ENCODE measurements at regions of chr6 and their contacts with region 1.

Region 1: DNA sequence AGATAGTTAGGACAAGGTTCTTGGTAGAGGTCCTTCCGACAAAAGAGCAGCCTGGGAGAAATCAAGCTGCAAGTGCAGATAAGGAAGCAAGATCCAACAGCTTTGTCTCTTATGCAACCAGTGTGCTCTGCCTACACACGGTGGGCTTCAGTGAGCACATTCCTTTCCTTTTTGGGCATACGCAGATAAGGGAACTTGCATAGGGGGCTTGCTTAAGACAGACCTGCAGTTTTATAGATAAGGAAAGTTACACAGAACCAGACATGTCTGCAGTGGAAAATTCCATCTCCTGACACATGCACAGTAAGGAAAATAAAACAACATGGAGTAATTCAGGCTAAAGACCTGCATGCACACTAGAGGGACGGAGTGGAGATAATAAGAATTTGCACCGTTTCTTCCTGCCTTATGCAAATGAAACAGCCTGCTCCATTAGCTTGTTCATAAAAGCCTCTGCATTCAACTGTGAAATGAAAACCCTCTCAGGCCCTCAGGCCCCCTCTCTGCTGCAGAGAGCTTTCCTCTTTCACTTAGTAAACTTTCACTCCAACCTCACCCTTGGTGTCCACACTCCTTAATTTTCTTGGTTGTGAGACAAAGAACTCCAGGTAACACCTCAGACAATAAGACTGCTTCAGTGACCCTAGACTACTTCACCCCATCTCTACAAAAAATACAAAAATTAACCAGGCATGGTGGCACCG is 97.5 kb upstream of the MYLIP start:
- DNase-seq: peak; percentile 93 to 98 (median 94)
- ATAC-seq: peak; percentile 97
- H3K4me3 ChIP-seq: no peak overlapping the region
- H3K27ac ChIP-seq: peak overlapping the region; percentile 83
- H3K4me1 ChIP-seq: peaks cover 10 to 33% of the 10 kb centered on the region in 2 experiments
- H3K27me3 ChIP-seq: no peaks in the 10 kb centered on the region
- CTCF ChIP-seq: no peak; a peak in 1 of 6 replicates
- EP300 ChIP-seq: peak; percentile 100
- POLR2A ChIP-seq: no peak
- RAD21 ChIP-seq: peak; percentile 38 to 62

Region 2: GRCh38 chr6:16004934-16005679 is 26.3 kb before region 1 on chr6:
- CTCF ChIA-PET with region 1: interaction called, 3 read pairs
- POLR2A ChIA-PET with region 1: interaction called, 3 read pairs
- in situ Hi-C with region 1: no loop called
- intact Hi-C with region 1: loop called (anchors 1 kb)
- DNase-seq: peak; percentile 73 to 88 (median 76)
- ATAC-seq: peak; percentile 83
- H3K4me3 ChIP-seq: no peak overlapping the region
- H3K27ac ChIP-seq: peak overlapping the region; percentile 78
- H3K4me1 ChIP-seq: peaks cover 49 to 80% of the 10 kb centered on the region in 2 experiments
- H3K27me3 ChIP-seq: no peaks in the 10 kb centered on the region
- CTCF ChIP-seq: no peak
- EP300 ChIP-seq: peak; percentile 82
- POLR2A ChIP-seq: no peak
- RAD21 ChIP-seq: peak in 1 of 2 experiments; percentile 15